ENCODE measurements at regions of chr7 and their contacts with region 1.

Region 1: DNA sequence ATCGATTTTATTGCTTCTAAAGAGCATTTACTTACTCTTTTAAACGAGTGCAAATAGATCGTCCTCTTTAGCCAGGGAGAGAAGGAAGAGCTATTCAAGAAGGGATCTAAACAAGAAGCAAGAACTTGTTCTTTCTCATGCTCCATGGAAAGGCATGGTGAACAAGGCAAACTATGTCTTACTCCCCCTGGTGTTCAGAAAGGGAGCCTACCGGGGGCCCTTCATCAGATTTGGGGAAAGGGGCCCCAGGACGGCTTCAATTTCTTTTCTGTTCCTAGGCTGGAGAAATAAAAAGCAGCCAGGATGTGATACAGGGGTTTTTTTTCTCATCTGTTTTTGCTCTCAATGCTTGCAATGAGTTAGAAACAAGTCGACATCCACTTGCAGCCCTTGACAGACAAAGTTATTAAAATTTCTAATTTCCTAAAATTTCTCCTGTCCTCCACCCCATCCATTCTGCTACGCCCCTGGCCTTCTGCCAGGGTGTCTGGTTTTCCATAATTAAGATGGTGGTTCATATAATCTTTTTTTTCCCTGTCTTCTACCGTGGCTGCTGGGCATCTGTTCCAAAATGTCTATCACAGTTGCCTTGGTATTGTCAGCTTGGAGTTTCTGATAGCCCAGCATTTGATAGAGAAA is 214.4 kb downstream of the CREB5 start:
- DNase-seq: peak; percentile 52
- H3K4me3 ChIP-seq: no peak overlapping the region
- H3K27ac ChIP-seq: no peak overlapping the region
- H3K4me1 ChIP-seq: no peaks in the 10 kb centered on the region
- CTCF ChIP-seq: peak; percentile 86

Region 2: DNA sequence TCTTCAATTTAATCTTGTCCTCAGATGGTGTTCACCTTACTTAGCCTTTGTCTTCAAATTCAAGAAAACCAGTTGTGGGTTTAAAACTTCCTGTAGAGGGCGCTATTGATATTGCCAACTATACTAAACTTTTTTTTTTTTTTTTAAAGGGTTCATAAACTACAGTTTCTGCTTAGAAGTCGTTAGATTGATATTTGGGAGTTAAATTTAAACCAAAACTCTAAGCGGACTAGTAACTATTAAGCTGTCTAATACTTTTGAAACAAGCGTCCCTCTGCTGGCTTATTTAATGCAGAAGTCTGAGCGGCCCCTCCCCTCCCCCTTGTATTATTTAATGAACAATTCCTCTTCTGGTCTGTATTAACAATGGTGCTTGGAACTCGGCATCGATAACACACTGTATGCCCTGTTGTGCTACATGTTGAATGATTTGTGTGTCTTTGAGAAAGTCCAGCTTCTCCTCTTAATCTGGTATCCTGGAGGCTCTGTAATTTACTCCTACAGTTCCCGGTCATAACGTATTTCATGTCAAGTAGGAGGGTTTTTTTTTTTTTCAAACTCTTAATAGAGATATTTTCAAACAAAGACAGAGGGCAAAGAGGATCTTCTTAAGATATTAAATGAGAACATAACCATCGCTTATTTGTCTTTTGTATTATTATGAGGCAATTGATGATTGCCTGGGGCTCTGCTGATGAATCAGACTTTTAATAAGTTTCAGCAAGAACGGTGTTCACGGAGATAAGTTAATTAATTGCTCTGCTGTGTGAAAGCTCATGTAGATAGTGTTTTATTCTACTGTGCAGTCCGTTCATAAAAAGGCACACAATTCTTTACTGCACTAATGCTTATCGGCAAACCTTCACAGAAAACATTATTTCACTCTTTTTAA is 237.0 kb before region 1 on chr7:
- CTCF ChIA-PET with region 1: no interaction called
- POLR2A ChIA-PET with region 1: no interaction called
- intact Hi-C with region 1: loop called (anchors 1 kb)
- DNase-seq: peak; percentile 75
- H3K4me3 ChIP-seq: no peak overlapping the region
- H3K27ac ChIP-seq: no peak overlapping the region
- H3K4me1 ChIP-seq: no peaks in the 10 kb centered on the region
- CTCF ChIP-seq: peak; percentile 99

Region 3: DNA sequence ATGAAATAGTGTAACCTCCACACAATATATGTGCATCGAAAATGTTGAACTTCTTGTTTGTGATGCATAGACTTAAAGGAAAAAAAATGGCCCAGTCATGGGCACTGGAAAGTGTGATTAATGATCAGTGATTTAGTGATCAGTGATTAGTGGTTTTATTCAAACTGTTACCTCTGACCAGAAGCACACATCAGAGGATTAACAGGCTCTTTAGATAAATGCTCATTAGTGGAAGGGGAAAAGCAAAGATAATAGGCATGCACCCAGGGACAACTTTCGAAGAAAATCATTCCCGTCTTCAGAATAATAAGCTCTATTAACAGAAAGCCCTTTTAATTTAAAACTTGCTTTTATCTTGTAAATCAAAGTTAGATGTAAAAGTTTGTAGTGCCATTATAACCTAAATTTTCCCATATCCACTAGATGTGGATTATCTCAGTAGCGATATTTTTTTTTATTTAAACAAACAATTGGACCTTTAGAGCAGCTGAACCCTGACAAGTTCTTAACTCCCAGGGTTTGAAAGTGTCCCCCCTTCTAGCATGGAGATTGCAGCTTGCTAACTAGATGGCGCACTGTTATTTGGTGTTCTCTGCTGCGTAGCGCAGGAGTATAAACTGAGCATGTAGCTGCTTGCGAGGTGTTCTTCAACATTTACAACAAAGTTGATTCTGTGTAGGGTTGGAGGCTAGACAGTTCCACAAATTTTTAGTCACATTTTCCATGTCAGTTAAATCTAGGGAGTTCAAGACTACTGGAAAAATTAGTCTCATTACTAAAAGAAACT is 214.7 kb before region 1 on chr7 and contains the start of gene CREB5:
- CTCF ChIA-PET with region 1: no interaction called
- POLR2A ChIA-PET with region 1: no interaction called
- intact Hi-C with region 1: loop called (anchors 2 kb)
- DNase-seq: peak; percentile 34
- H3K4me3 ChIP-seq: no peak within 1 kb of the TSS
- H3K27ac ChIP-seq: no peak within 1 kb of the TSS
- H3K4me1 ChIP-seq: peaks cover 5% of the 10 kb centered on the region
- CTCF ChIP-seq: peak; percentile 71
- total RNA-seq, gene CREB5: 2.0 and 5.6 TPM in 2 replicates

Region 4: GRCh38 chr7:28509251-28510022 is 117.3 kb before region 1 on chr7:
- CTCF ChIA-PET with region 1: no interaction called
- POLR2A ChIA-PET with region 1: no interaction called
- intact Hi-C with region 1: loop called (anchors 10 kb)
- DNase-seq: no peak
- H3K4me3 ChIP-seq: no peak overlapping the region
- H3K27ac ChIP-seq: no peak overlapping the region
- H3K4me1 ChIP-seq: no peaks in the 10 kb centered on the region
- CTCF ChIP-seq: no peak

Region 5: GRCh38 chr7:28853834-28854749 is 227.3 kb after region 1 on chr7:
- CTCF ChIA-PET with region 1: no interaction called
- POLR2A ChIA-PET with region 1: no interaction called
- intact Hi-C with region 1: loop called (anchors 5 kb)
- DNase-seq: peak; percentile 72
- H3K4me3 ChIP-seq: peak overlapping the region; percentile 45
- H3K27ac ChIP-seq: no peak overlapping the region
- H3K4me1 ChIP-seq: peaks cover 7% of the 10 kb centered on the region
- CTCF ChIP-seq: peak; percentile 84

Measured in OCI-LY7 (cell line).